GM18951 (cell line): ENCODE measurements at regions of chr1 and their contacts with region 1.

Region 1: GRCh38 chr1:182955596-182956588 is 2.9 kb upstream of the SHCBP1L start:
- POLR2A ChIP-seq: no peak

Region 2: DNA sequence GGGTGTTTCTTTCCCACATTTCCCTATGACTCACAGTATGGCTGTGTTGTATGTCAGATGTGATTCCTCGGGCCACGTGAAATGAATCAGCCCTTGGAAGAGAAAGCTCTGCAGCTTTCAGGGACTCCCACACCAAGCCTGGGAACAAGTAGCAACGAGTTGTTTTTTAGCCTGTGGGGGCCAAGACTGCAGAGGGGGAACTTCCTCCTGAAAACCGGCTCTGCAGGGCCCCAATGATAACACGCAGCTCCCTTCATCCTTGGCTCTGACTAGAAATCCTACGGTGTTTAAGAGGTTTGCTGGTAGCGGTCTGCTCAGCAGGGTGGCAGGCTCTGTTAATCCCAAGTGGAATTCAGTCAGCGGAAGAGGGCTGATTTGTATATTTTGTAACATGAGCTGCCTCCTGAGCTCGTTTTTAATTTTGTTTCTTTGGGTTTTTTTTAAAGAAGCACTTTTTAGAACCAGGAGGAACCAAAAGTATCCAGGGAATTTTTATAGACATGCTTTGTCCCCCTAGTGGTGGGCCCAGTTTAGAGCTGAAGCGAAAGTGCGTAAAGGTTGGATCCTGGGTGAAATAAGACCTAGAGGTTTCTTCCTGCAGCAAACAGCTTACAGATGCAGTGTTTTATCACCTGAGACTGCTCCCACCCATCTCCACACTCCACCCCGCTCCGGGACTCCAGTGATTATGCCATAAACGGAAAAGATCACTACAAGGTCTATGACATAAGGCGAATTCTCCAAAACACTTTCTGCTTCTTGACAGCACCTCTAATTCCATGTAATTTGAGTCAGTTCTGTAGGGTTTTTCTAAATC is 279.0 kb after region 1 on chr1:
- in situ Hi-C with region 1: loop called (anchors 10 kb)
- POLR2A ChIP-seq: no peak